ENCODE measurements at regions of chr20 and their contacts with region 1.

Region 1: DNA sequence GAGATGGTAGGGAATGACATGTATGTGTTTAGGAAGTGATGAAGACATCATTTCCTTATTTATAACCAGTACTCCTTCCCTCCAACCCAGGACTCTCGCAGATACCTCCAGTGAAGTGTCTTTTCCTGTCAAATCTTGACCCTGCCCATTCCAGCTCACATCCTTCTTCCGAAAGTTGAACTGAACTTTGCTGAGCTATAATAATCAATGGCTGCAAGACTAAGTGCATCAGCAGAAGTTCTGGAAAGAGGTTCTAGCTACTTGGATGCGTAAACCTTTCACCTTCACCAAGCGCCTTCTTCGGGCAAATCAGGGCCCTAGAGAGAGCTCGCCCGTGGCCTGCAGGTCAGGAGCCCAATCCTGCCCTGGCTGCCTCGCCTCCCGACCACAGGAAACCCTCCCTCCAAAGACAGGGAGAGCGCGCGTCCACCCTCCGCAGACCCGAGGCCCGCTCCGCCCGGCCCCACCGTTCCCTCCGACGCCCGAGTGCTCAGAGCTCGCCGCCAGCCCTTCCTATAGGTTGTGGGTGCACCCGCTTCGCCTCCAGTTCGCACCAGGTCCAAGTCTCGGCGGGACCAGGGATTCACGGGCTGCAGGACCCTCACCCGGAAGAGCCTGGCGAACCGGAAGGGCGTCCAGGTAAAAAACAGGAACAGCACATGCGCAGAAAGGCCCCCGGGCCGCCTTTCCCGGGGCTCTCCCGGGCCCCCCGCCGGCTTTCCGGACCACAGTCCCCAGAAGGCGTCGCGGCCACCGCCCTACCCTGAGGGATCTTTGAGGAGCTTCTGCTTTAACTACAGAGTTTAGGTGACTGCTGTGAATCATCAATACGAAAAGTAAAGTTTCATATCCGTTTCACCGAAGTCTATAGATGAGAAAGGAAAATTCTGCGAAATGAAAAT is at the start of gene ZNF334:
- DNase-seq: peak; percentile 83
- ATAC-seq: peak; percentile 99
- H3K4me3 Mint-ChIP-seq: peak within 1 kb of the TSS; percentile 77
- H3K27ac Mint-ChIP-seq: peak within 1 kb of the TSS; percentile 76
- H3K4me1 Mint-ChIP-seq: peaks cover 24% of the 10 kb centered on the region
- H3K27me3 Mint-ChIP-seq: peaks cover 29% of the 10 kb centered on the region
- total RNA-seq, gene ZNF334: 3.4 to 4.9 TPM

Region 2: DNA sequence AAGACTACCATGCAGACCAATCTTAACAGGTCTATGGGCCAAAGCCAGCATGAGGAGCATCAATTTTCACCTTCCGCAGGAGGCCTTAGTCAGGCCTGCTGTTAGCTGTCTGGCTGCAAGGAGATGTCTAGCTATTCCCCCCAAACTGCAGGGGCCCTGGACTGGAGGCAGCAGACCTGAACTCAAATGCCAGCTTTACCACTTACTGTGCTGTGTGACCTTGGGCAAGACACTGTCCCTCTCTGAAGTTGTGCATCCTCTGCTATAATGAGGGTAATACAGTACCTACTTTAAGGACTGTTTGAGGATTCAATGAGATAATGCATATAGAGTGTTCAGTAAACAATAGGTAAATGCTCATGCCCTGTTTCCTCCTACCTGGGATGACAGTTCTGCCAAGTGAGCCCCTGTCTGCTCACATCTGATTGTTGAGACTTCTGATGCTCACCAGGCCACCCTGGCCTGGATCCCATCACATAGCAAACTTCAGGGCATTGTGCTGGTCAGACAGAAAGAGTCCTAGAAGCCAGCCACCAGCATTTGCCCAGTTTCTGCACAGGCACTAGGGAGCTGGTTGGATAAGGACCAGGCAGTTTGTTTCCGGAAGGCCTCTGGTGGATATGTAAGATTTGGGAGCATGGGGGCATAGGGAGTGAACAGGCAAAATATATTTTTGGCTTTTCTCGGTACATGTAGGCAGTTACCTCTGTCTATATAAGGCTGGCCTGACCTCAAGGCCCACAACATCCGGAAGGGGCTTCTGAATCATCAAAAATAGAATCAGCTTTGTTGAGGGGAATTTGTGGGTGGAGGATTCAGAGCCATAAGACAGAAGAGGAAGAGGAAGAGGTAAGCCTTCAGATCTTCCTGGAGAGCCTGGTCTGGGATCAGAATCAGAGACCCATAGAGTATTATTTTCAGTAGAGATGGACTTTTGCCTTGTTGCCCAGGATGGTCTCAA is 39.5 kb after region 1 on chr20:
- CTCF ChIA-PET with region 1: interaction called, 3 read pairs
- POLR2A ChIA-PET with region 1: no interaction called
- intact Hi-C with region 1: loop called (anchors 1 to 2 kb)
- DNase-seq: peak; percentile 78
- ATAC-seq: peak; percentile 89
- H3K4me3 Mint-ChIP-seq: peak overlapping the region; percentile 33
- H3K27ac Mint-ChIP-seq: peak overlapping the region; percentile 69
- H3K4me1 Mint-ChIP-seq: peaks cover 35% of the 10 kb centered on the region
- H3K27me3 Mint-ChIP-seq: peaks cover 2% of the 10 kb centered on the region

Measured in activated CD4-positive, alpha-beta T cell treated with anti-CD3 and anti-CD28 coated beads for 36 hours (primary cell).